Endothelial cell of umbilical vein (primary cell): ENCODE measurements at regions of chr12 and their contacts with region 1.

Region 1: DNA sequence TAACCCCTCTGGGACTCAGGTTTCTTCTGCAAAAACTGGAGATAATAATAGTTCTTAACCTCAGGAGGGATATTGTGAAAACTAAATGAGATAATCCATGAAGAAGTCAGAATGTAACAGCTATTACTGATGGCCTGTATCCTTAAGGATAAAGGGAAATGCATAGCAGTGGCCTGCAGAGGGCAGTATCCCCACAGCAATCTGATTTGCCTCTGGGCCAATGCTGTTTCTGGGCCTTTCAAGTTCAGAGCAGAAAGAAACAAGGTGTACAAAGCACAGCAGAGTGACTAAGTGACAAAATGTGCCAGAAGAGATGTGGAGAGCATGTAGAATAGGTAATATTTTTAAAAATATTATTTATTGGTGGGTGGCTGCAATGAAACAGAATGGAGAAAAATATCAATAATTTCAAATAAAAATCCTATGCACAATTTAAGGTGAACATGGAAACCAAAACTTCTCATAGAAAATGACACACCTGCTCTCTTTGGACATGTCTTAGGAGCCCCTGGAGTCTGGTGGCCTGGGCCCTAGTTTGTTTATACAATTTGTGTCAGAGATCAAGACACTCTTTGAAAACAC is 90.3 kb downstream of the C12orf75 start:
- DNase-seq: peak; percentile 90
- H3K4me3 ChIP-seq: no peak overlapping the region
- H3K27ac ChIP-seq: peak overlapping the region; percentile 20
- H3K4me1 ChIP-seq: peaks cover 7% of the 10 kb centered on the region
- H3K27me3 ChIP-seq: no peaks in the 10 kb centered on the region
- CTCF ChIP-seq: peak; percentile 70 to 90
- POLR2A ChIP-seq: no peak

Region 2: DNA sequence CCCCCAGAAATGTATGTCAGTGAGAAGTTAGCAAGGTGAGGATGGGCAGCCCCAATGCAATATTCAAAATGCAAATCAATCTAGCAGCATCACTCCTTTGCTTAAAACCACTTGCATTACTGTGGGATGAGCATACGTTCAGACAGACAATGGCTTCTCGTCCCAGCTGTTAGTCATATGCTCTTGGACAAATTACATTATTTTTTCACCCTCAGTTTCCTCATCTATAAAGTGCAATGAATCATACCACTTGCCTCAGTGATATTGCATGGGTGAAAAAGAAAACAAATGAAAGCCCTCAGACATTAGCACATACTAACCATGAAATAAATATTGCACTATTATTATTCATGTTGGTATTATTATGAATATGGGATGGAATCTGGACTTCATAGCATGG is 42.1 kb after region 1 on chr12:
- CTCF ChIA-PET with region 1: interaction called, 72 read pairs
- POLR2A ChIA-PET with region 1: no interaction called
- dilution Hi-C with region 1: no loop called
- intact Hi-C with region 1: no loop called
- DNase-seq: no peak
- H3K4me3 ChIP-seq: no peak overlapping the region
- H3K27ac ChIP-seq: no peak overlapping the region
- H3K4me1 ChIP-seq: peaks cover 61% of the 10 kb centered on the region
- H3K27me3 ChIP-seq: no peaks in the 10 kb centered on the region
- CTCF ChIP-seq: no peak
- POLR2A ChIP-seq: no peak

Region 3: GRCh38 chr12:105507311-105508038 is 86.7 kb after region 1 on chr12:
- CTCF ChIA-PET with region 1: interaction called, 8 read pairs
- POLR2A ChIA-PET with region 1: no interaction called
- dilution Hi-C with region 1: no loop called
- intact Hi-C with region 1: loop called (anchors 2 kb)
- DNase-seq: peak; percentile 60
- H3K4me3 ChIP-seq: no peak overlapping the region
- H3K27ac ChIP-seq: peak overlapping the region; percentile 10
- H3K4me1 ChIP-seq: peaks cover 14% of the 10 kb centered on the region
- H3K27me3 ChIP-seq: no peaks in the 10 kb centered on the region
- CTCF ChIP-seq: no peak
- POLR2A ChIP-seq: no peak

Region 4: GRCh38 chr12:105587237-105587636 is 166.5 kb after region 1 on chr12:
- CTCF ChIA-PET with region 1: interaction called, 24 read pairs
- POLR2A ChIA-PET with region 1: no interaction called
- dilution Hi-C with region 1: no loop called
- intact Hi-C with region 1: no loop called
- DNase-seq: peak; percentile 94
- H3K4me3 ChIP-seq: no peak overlapping the region
- H3K27ac ChIP-seq: peak overlapping the region; percentile 51
- H3K4me1 ChIP-seq: peaks cover 29% of the 10 kb centered on the region
- H3K27me3 ChIP-seq: no peaks in the 10 kb centered on the region
- CTCF ChIP-seq: no peak
- POLR2A ChIP-seq: peak; percentile 59

Region 5: GRCh38 chr12:106136263-106136662 is 715.5 kb after region 1 on chr12:
- CTCF ChIA-PET with region 1: interaction called, 112 read pairs
- POLR2A ChIA-PET with region 1: no interaction called
- dilution Hi-C with region 1: no loop called
- intact Hi-C with region 1: loop called (anchors 1 kb)
- DNase-seq: peak; percentile 90
- H3K4me3 ChIP-seq: peak overlapping the region in 2 of 3 experiments; percentile 72 to 73
- H3K27ac ChIP-seq: peak overlapping the region; percentile 77
- H3K4me1 ChIP-seq: peaks cover 67% of the 10 kb centered on the region
- H3K27me3 ChIP-seq: no peaks in the 10 kb centered on the region
- CTCF ChIP-seq: peak; percentile 75 to 76
- POLR2A ChIP-seq: no peak

Region 6: DNA sequence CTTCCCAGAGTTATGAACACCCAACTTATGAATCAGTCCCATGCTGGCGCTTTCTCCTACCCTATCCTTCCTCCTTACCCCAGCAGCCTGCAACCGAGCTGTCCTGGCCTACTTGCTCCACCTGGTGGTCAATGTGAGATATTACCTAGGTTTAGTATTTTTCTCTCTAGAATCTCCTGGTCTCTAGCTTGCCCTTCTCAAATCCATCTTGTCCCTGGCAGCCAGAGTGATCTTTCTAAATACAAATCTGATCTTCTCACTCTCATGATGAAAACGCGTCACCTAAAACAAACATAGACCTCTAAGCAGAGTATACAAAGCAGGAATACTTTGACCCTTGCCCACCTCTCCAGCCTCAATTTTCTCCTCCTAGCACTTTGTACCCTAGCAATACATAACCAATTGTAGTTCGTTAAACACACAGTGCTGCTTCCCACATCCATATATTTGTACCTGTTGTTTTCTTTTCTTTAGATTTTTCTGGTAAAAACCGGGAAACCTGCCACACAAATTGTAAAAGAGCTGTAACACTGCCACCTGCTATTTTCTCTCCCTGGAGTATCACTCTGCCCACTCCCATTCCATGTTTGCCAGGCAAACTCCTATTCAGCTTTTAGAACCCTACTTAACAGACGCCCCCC is 861.8 kb after region 1 on chr12:
- CTCF ChIA-PET with region 1: interaction called, 4 read pairs
- POLR2A ChIA-PET with region 1: no interaction called
- dilution Hi-C with region 1: no loop called
- intact Hi-C with region 1: loop called (anchors 1 kb)
- DNase-seq: peak; percentile 48
- H3K4me3 ChIP-seq: no peak overlapping the region
- H3K27ac ChIP-seq: no peak overlapping the region
- H3K4me1 ChIP-seq: peaks cover 6% of the 10 kb centered on the region
- H3K27me3 ChIP-seq: peaks cover 4 to 9% of the 10 kb centered on the region in 2 experiments
- CTCF ChIP-seq: peak; percentile 65 to 70
- POLR2A ChIP-seq: no peak